ENCODE measurements at regions of chr3 and their contacts with region 1.

Region 1: DNA sequence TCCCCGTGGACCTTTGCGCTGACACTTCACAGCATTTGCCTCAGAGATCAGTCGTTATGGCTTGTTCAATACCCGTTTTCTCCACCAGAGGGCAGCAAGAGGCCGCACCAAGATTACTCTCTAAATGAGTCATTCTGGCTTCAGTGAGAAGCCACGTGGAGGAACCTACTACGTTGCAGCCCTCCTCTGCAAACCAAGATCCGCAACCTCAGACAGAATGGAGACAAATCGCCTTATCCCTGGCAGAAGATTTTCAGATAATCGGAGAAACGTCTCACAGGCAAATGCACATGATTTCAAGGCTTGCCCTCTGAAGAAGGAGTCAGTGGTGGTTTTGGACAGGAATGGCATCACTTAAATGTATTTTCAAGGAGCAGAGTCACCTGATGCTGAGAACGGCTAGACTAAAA is 60.5 kb downstream of the GTPBP8 start:
- DNase-seq: peak; percentile 88
- ATAC-seq: peak; percentile 100
- H3K4me3 ChIP-seq: no peak overlapping the region
- H3K4me3 Mint-ChIP-seq: no peak overlapping the region
- H3K27ac ChIP-seq: no peak overlapping the region
- H3K27ac Mint-ChIP-seq: no peak overlapping the region
- H3K4me1 ChIP-seq: peaks cover 0 to 4% of the 10 kb centered on the region in 2 donors
- H3K4me1 Mint-ChIP-seq: peaks cover 2% of the 10 kb centered on the region
- H3K27me3 ChIP-seq: no peaks in the 10 kb centered on the region
- H3K27me3 Mint-ChIP-seq: no peaks in the 10 kb centered on the region
- CTCF ChIP-seq: peak; percentile 95

Region 2: GRCh38 chr3:113019182-113020137 is 31.8 kb before region 1 on chr3:
- CTCF ChIA-PET with region 1: interaction called, 3 read pairs
- POLR2A ChIA-PET with region 1: no interaction called
- intact Hi-C with region 1: loop called (anchors 2 kb)
- DNase-seq: peak; percentile 89
- ATAC-seq: peak; percentile 85
- H3K4me3 ChIP-seq: peak overlapping the region; percentile 75 to 84 (median 84)
- H3K4me3 Mint-ChIP-seq: peak overlapping the region; percentile 94
- H3K27ac ChIP-seq: peak overlapping the region; percentile 90 to 91
- H3K27ac Mint-ChIP-seq: peak overlapping the region; percentile 94
- H3K4me1 ChIP-seq: peaks cover 22 to 25% of the 10 kb centered on the region in 2 donors
- H3K4me1 Mint-ChIP-seq: peaks cover 37% of the 10 kb centered on the region
- H3K27me3 ChIP-seq: no peaks in the 10 kb centered on the region
- H3K27me3 Mint-ChIP-seq: no peaks in the 10 kb centered on the region
- CTCF ChIP-seq: no peak

Region 3: GRCh38 chr3:113136071-113136470 is 84.8 kb after region 1 on chr3:
- CTCF ChIA-PET with region 1: interaction called, 3 read pairs
- POLR2A ChIA-PET with region 1: no interaction called
- intact Hi-C with region 1: loop called (anchors 1 kb)
- DNase-seq: peak; percentile 20
- ATAC-seq: no peak
- H3K4me3 ChIP-seq: no peak overlapping the region
- H3K4me3 Mint-ChIP-seq: no peak overlapping the region
- H3K27ac ChIP-seq: no peak overlapping the region
- H3K27ac Mint-ChIP-seq: no peak overlapping the region
- H3K4me1 ChIP-seq: no peaks in the 10 kb centered on the region
- H3K4me1 Mint-ChIP-seq: no peaks in the 10 kb centered on the region
- H3K27me3 ChIP-seq: no peaks in the 10 kb centered on the region
- H3K27me3 Mint-ChIP-seq: no peaks in the 10 kb centered on the region
- CTCF ChIP-seq: peak; percentile 42

Region 4: DNA sequence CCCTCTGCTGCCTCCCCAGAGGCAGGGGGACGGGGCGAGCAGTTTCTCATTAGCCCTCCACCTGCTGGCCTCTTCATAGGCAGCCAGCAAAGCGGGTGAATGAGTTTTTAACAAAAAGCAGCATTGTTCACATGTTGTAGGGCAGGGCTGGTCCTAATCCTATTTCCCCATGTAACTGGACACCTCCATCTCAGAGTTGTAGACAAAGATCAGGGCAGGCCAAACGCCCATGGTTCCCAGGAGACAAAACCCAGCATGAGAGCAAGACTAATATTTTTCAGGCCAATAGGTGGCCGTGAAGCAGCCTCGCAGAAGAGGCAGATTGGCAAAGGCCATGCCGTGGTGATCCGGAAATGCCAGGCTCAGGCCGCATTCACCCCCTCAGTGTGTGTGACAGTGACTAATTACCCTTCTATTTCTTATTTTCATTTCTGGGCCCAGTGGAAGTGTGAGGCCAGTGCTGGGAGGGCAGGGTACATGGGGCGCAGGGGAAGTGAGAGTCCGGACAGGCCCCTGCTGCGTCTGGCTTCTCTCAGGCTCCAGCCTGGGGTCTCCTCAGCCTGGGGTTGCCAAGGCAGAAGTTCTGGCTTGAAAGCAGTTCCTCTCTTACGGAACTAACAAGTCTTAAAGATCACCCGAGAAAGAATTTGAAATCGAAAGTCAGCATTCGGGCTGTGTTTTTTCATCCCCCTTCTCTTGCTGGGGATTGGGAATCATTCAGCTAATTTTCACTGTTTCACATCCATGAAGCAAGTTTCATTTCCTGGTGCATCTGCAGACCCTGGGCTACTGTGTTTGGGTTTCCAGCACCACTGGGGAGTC is 224.8 kb after region 1 on chr3:
- CTCF ChIA-PET with region 1: interaction called, 11 read pairs
- POLR2A ChIA-PET with region 1: no interaction called
- intact Hi-C with region 1: no loop called
- DNase-seq: peak; percentile 53
- ATAC-seq: peak; percentile 74
- H3K4me3 ChIP-seq: peak overlapping the region in 4 of 5 experiments; percentile 20 to 50 (median 42)
- H3K4me3 Mint-ChIP-seq: peak overlapping the region; percentile 89
- H3K27ac ChIP-seq: peak overlapping the region; percentile 60 to 63
- H3K27ac Mint-ChIP-seq: peak overlapping the region; percentile 92
- H3K4me1 ChIP-seq: peaks cover 28 to 38% of the 10 kb centered on the region in 2 donors
- H3K4me1 Mint-ChIP-seq: peaks cover 38% of the 10 kb centered on the region
- H3K27me3 ChIP-seq: no peaks in the 10 kb centered on the region
- H3K27me3 Mint-ChIP-seq: no peaks in the 10 kb centered on the region
- CTCF ChIP-seq: no peak

Region 5: DNA sequence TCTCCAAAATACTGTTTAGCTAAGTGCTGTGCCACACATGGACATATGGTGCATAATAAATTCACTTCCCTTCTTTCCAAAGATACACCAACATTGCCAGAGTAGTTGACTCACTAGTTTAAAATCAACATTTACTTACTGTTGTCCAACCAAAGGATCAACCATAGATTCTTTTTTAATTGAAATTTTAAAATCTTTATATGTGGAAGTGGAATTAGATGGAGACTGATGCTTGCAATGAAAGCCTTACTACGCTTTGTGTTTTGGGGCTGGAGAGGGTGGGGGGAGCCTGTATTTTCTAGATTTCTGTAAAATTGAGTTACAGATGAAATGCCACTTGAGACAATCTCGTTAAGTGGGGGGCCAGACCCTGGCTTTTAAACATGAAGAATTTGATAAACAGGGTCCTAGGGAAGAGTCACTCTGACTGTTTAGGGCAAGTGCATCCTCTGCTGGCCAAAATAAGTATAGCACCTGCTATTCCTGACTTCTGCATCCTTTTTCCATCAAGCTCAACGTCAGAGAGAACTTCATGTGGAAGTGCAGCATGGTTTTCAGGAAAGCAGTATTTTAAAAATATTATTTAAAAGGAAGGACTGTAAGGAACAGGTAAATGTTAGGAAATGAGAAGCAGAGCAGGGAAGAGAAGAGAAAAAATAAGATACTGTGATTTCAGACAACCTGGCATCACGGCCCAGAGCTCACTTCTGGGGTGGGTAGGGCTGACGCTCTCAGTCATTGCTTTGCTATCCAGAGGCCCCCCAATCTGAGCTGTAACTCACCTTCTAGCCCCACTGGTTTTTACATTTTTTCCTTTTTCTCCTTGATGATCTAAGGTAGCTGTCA is 236.7 kb after region 1 on chr3:
- CTCF ChIA-PET with region 1: interaction called, 110 read pairs
- POLR2A ChIA-PET with region 1: no interaction called
- intact Hi-C with region 1: loop called (anchors 1 kb)
- DNase-seq: peak; percentile 69
- ATAC-seq: peak; percentile 69
- H3K4me3 ChIP-seq: no peak overlapping the region
- H3K4me3 Mint-ChIP-seq: no peak overlapping the region
- H3K27ac ChIP-seq: no peak overlapping the region
- H3K27ac Mint-ChIP-seq: no peak overlapping the region
- H3K4me1 ChIP-seq: no peaks in the 10 kb centered on the region
- H3K4me1 Mint-ChIP-seq: no peaks in the 10 kb centered on the region
- H3K27me3 ChIP-seq: no peaks in the 10 kb centered on the region
- H3K27me3 Mint-ChIP-seq: no peaks in the 10 kb centered on the region
- CTCF ChIP-seq: peak; percentile 100

Region 6: DNA sequence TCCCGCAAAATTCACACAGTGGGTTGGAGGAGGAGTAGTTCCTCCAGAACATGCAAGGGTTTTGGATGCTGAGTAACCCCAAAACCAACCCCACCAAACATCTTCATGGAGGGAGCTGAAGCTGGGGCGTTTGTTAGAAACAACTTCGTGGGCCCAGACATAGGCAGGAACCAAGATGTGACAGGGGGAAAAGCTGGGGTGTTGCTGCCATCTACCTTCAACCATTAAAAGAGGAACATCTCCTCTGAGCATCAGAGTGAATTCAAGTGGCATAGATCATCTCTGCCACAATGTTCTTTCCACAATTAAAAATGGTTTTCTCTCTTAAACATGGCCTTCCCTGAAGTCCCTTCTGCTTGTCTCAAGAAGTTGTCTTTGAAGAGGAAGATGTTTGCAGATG is 501.5 kb after region 1 on chr3:
- CTCF ChIA-PET with region 1: no interaction called
- POLR2A ChIA-PET with region 1: no interaction called
- intact Hi-C with region 1: loop called (anchors 1 kb)
- DNase-seq: peak; percentile 68
- ATAC-seq: peak; percentile 62
- H3K4me3 ChIP-seq: no peak overlapping the region
- H3K4me3 Mint-ChIP-seq: no peak overlapping the region
- H3K27ac ChIP-seq: peak overlapping the region in 1 of 2 donors; percentile 42
- H3K27ac Mint-ChIP-seq: peak overlapping the region; percentile 22
- H3K4me1 ChIP-seq: peaks cover 4 to 6% of the 10 kb centered on the region in 2 donors
- H3K4me1 Mint-ChIP-seq: peaks cover 21% of the 10 kb centered on the region
- H3K27me3 ChIP-seq: no peaks in the 10 kb centered on the region
- H3K27me3 Mint-ChIP-seq: no peaks in the 10 kb centered on the region
- CTCF ChIP-seq: peak; percentile 64